Gastrocnemius medialis (tissue), 4 donors: ENCODE measurements at regions of chr20 and their contacts with region 1.

Region 1: GRCh38 chr20:45857114-45857881 is at the starts of genes ACOT8 and ZSWIM3:
- DNase-seq: peak; percentile 98 to 99
- ATAC-seq: peak; percentile 99 to 100
- H3K4me3 ChIP-seq: peak within 1 kb of the TSS; percentile 83 to 88 (median 86)
- H3K27ac ChIP-seq: peak within 1 kb of the TSS; percentile 82 to 93 (median 87)
- H3K4me1 ChIP-seq: peaks cover 38 to 39% of the 10 kb centered on the region in 2 donors
- H3K27me3 ChIP-seq: no peaks in the 10 kb centered on the region
- CTCF ChIP-seq: no peak
- POLR2A ChIP-seq: peak; percentile 69 to 76
- total RNA-seq, gene ACOT8: 32.3 to 66.2 (median 41.4) TPM
- total RNA-seq, gene ZSWIM3: 1.3 to 3.3 (median 2.1) TPM

Region 2: GRCh38 chr20:45752746-45753145 is 104.6 kb before region 1 on chr20:
- in situ Hi-C with region 1: no loop called
- intact Hi-C with region 1: no loop called
- DNase-seq: no peak
- ATAC-seq: no peak
- H3K4me3 ChIP-seq: no peak overlapping the region
- H3K27ac ChIP-seq: no peak overlapping the region
- H3K4me1 ChIP-seq: no peaks in the 10 kb centered on the region
- H3K27me3 ChIP-seq: no peaks in the 10 kb centered on the region
- CTCF ChIP-seq: no peak
- POLR2A ChIP-seq: no peak

Region 3: DNA sequence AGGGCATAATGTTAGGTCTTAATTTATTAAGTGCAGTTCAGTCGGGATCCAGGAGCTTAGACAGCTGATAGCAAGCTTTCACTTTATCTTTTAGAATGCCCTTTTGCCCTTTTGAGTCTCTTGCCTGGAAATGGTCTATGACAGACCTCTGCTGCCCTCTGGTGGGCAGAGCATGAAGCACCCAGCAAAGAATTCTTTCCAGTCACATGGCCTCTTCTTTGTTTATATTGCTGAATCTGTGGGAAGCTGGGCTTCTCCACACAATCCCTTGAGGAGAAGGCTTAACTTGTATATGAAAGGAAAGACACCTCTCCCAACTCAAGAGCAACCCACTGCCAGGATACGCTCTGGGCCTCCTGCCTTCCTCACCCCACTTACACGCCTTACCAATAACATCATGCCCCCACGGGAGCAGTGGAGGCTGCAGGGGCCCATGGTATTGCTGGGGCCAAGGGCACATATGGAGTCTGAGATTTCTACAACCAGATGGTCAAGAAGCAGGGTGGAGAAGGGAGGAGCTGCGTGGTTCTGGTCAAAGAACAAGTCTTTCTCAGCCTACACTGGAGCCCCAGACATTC is 86.0 kb before region 1 on chr20:
- in situ Hi-C with region 1: no loop called
- intact Hi-C with region 1: no loop called
- DNase-seq: peak; percentile 15 to 67
- ATAC-seq: peak; percentile 87 to 90
- H3K4me3 ChIP-seq: no peak overlapping the region
- H3K27ac ChIP-seq: peak overlapping the region; percentile 34 to 54 (median 44)
- H3K4me1 ChIP-seq: peaks cover 4 to 7% of the 10 kb centered on the region in 2 donors
- H3K27me3 ChIP-seq: no peaks in the 10 kb centered on the region
- CTCF ChIP-seq: peak; percentile 88 to 94 (median 91)
- POLR2A ChIP-seq: no peak

Region 4: GRCh38 chr20:45781391-45781931 is 75.8 kb before region 1 on chr20:
- in situ Hi-C with region 1: no loop called
- intact Hi-C with region 1: no loop called
- DNase-seq: no peak
- ATAC-seq: no peak
- H3K4me3 ChIP-seq: no peak overlapping the region
- H3K27ac ChIP-seq: no peak overlapping the region
- H3K4me1 ChIP-seq: no peaks in the 10 kb centered on the region
- H3K27me3 ChIP-seq: no peaks in the 10 kb centered on the region
- CTCF ChIP-seq: no peak
- POLR2A ChIP-seq: no peak

Region 5: DNA sequence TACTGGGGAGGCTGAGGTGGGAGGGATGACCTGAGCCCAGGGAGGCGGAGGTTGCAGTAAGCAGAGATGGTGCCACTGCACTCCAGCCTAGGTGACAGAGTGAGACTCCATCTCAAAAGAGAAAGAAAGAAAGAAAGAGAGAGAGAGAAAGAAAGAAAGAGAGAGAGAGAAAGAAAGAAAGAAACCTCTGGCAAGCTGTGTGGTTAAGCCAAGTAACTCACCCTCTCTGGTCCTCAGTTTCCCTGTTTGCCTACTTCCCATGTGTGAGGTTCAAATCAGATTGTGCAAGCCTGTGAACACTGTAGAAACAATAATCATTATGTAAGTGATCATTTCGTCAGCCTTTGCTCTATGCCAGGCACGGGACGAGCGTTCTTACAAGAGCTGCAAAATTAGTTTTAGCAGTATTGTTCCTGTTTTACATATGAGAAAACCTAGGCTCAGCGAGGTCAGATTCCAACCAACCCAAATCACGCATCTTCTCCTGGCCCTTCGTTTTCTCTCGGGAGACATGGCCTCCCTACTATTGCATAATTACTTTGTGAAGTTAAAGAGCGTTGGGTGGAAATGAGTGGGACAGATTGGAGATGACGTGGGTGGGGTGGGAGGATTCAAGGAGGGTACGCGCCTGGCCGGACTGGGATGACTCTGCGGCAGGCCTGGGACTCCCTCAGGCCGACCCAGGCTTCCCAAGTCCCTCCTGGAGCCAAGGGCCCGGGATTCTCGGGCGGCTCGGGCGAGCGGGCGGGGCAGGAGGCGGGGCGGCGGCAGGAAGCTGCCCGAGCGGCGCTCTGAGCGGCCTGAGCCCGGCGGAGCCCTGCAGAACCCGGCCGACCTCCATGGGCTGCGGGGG is 24.0 kb before region 1 on chr20 and contains the start of gene SNX21:
- in situ Hi-C with region 1: no loop called
- intact Hi-C with region 1: loop called (anchors 2 kb)
- DNase-seq: peak; percentile 70 to 87
- ATAC-seq: peak; percentile 47 to 57
- H3K4me3 ChIP-seq: peak within 1 kb of the TSS; percentile 73 to 80 (median 79)
- H3K27ac ChIP-seq: peak within 1 kb of the TSS; percentile 95 to 97 (median 96)
- H3K4me1 ChIP-seq: peaks cover 46 to 66% of the 10 kb centered on the region in 2 donors
- H3K27me3 ChIP-seq: no peaks in the 10 kb centered on the region
- CTCF ChIP-seq: no peak
- POLR2A ChIP-seq: no peak
- total RNA-seq, gene SNX21: 35.8 to 114 (median 79.0) TPM

Region 6: GRCh38 chr20:45880988-45881788 is 23.9 kb after region 1 on chr20 and contains the start of gene ZSWIM1:
- in situ Hi-C with region 1: no loop called
- intact Hi-C with region 1: loop called (anchors 1 kb)
- DNase-seq: peak; percentile 98 to 99
- ATAC-seq: peak; percentile 100
- H3K4me3 ChIP-seq: peak within 1 kb of the TSS; percentile 67 to 70 (median 68)
- H3K27ac ChIP-seq: peak within 1 kb of the TSS; percentile 87 to 95 (median 92)
- H3K4me1 ChIP-seq: peaks cover 9 to 13% of the 10 kb centered on the region in 2 donors
- H3K27me3 ChIP-seq: no peaks in the 10 kb centered on the region
- CTCF ChIP-seq: no peak
- POLR2A ChIP-seq: peak in 1 of 2 donors; percentile 45
- total RNA-seq, gene ZSWIM1: 5.7 to 8.5 (median 6.9) TPM